Common myeloid progenitor, CD34-positive (primary cell): ENCODE measurements at regions of chr11 and their contacts with region 1.

Region 1: GRCh38 chr11:61718621-61719302 is 33.7 kb upstream of the MYRF start:
- DNase-seq: peak in 2 of 3 donors; percentile 35 to 44
- H3K4me3 ChIP-seq: no peak overlapping the region
- H3K27ac ChIP-seq: no peak overlapping the region
- H3K4me1 ChIP-seq: peaks cover 0 to 15% (median 9%) of the 10 kb centered on the region in 4 experiments
- H3K27me3 ChIP-seq: no peaks in the 10 kb centered on the region

Region 2: GRCh38 chr11:61701242-61701886 is 17.4 kb before region 1 on chr11:
- CTCF ChIA-PET with region 1: interaction called, 19 read pairs
- POLR2A ChIA-PET with region 1: no interaction called
- DNase-seq: peak; percentile 42 to 68 (median 62)
- H3K4me3 ChIP-seq: no peak overlapping the region
- H3K27ac ChIP-seq: no peak overlapping the region
- H3K4me1 ChIP-seq: peaks cover 10 to 66% (median 50%) of the 10 kb centered on the region in 4 experiments
- H3K27me3 ChIP-seq: no peaks in the 10 kb centered on the region